Posterior cingulate gyrus (tissue), 11 donors: ENCODE measurements at regions of chr10 and their contacts with region 1.

Region 1: GRCh38 chr10:59830601-59831259 is 75.6 kb downstream of the CCDC6 start:
- DNase-seq: peak in 5 of 10 donors; percentile 19 to 79 (median 47)

Region 2: GRCh38 chr10:59190332-59190731 is 640.4 kb before region 1 on chr10:
- intact Hi-C with region 1: no loop called
- DNase-seq: no peak

Region 3: GRCh38 chr10:59303018-59303417 is 527.7 kb before region 1 on chr10:
- intact Hi-C with region 1: loop called (anchors 5 kb)
- DNase-seq: no peak

Region 4: GRCh38 chr10:59847326-59847725 is 16.6 kb after region 1 on chr10:
- intact Hi-C with region 1: no loop called
- DNase-seq: no peak

Region 5: DNA sequence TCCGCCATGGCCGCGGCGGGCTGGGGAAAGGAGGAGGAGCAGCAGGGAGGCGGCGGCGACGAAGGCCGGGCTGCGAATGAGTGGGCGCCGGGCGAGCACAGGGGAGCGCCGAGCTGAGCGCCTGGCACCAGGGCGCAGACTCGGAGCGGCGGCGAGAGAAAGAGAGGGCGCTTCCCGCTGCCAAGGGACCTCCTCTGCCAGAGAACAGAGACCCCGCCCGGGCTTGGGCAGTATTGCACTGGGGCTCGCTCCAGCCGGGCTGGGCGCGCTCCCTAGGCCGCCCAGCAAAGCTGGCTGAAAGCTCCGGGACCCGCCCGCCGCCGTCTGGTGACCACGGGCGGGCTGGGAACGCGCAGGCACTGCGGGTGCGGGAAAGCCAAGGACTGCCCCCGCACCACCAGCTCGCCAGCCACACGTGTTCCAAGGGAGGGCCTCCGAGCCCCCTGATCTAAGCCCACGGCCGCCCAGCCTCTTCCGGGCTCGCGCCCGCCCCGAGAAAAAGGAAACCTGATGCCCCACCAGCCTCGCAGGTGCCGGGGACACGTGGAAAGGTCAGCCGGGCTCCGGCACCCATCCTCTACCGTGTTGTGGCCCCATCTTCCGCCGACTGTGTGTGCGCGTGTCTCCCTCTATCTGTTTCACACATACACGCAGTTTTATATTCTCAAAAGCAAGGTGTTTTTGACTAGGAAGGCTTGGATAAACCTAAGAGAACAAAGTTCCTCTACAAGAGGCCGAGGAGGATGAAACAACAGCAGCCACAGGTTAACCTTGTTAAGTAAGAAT is 75.9 kb after region 1 on chr10 and contains the start of gene CCDC6:
- intact Hi-C with region 1: loop called (anchors 10 kb)
- DNase-seq: peak; percentile 88 to 99 (median 92)

Region 6: DNA sequence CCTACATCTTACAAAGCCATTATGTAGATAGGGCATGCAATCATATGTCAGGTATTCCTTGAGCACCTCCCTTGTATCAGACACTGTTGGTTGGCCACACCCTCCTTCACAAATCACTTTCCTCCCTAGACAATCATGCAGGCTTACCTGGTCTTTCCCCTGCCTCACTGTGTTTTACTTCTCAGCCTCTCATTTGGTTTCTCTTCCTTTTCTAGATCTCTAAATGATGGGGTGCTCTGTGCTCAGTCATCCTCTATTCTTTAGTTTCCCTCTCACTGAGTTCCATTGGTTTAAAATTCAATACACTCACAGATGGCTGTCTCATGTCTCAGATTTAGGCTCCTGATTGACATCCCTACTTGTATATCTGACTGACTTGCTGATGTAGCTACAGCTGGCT is 527.6 kb after region 1 on chr10:
- intact Hi-C with region 1: no loop called
- DNase-seq: no peak